ENCODE measurements at regions of chr1 and their contacts with region 1.

Region 1: GRCh38 chr1:236332092-236332758 is 50.5 kb upstream of the ERO1B start:
- DNase-seq: no peak
- H3K27ac ChIP-seq: no peak overlapping the region
- CTCF ChIP-seq: no peak

Region 2: GRCh38 chr1:236167578-236167977 is 164.6 kb before region 1 on chr1:
- CTCF ChIA-PET with region 1: interaction called, 11 read pairs
- POLR2A ChIA-PET with region 1: no interaction called
- DNase-seq: no peak
- H3K27ac ChIP-seq: no peak overlapping the region
- CTCF ChIP-seq: no peak

Measured in RWPE1 (cell line).